ENCODE measurements at regions of chr2 and their contacts with region 1.

Region 1: GRCh38 chr2:61538200-61538919 is at the start of gene XPO1:
- DNase-seq: peak; percentile 96
- ATAC-seq: peak; percentile 77
- H3K4me3 Mint-ChIP-seq: peak within 1 kb of the TSS; percentile 90
- H3K27ac Mint-ChIP-seq: peak within 1 kb of the TSS; percentile 100
- H3K4me1 Mint-ChIP-seq: peaks cover 39% of the 10 kb centered on the region
- H3K27me3 Mint-ChIP-seq: no peaks in the 10 kb centered on the region
- CTCF ChIP-seq: no peak
- total RNA-seq, gene XPO1: 183 and 217 TPM in 2 replicates

Region 2: DNA sequence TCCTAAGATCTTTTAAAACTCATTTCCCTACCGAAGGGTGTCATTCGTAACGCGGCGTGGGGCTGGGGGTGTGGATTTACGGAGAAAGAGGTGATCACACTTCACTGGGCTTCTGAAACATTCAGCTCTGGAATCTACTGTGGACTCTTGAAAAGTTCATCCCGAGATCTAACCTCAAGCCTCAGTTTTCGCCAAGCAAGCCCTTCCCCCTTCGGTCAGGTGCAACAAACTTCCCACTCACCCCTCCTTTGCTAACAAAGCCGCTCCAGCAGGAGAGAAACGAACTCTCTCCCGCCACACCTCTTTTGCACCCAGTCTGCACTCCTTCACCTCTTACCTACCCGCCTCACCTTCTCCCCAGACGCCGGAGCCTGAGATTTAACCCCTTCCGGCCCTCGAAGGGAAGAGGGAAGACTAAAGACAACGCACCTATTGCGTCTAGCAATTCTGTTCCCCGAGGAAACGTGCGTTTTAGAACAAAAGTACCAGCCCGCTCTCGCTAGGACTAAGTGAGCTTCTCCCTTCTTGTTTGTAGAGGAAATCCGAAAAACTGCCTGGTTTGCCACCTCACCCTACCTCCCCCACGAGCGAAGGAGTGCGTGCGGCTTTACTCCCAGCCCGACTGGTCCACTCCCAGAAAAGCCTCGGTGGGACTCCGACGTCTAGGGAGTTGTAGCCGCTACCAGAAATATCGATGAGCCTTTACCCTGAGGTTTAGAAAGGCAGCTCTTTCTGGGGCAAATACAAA is 521.4 kb before region 1 on chr2:
- CTCF ChIA-PET with region 1: no interaction called
- POLR2A ChIA-PET with region 1: interaction called, 5 read pairs
- intact Hi-C with region 1: loop called (anchors 1 kb)
- DNase-seq: peak; percentile 62
- ATAC-seq: peak; percentile 70
- H3K4me3 Mint-ChIP-seq: peak overlapping the region; percentile 99
- H3K27ac Mint-ChIP-seq: peak overlapping the region; percentile 98
- H3K4me1 Mint-ChIP-seq: peaks cover 33% of the 10 kb centered on the region
- H3K27me3 Mint-ChIP-seq: no peaks in the 10 kb centered on the region
- CTCF ChIP-seq: no peak

Region 3: GRCh38 chr2:61426267-61426897 is 112.0 kb before region 1 on chr2:
- CTCF ChIA-PET with region 1: interaction called, 5 read pairs
- POLR2A ChIA-PET with region 1: interaction called, 21 read pairs
- intact Hi-C with region 1: loop called (anchors 2 kb)
- DNase-seq: peak; percentile 62
- ATAC-seq: peak; percentile 89
- H3K4me3 Mint-ChIP-seq: peak overlapping the region; percentile 19
- H3K27ac Mint-ChIP-seq: peak overlapping the region; percentile 92
- H3K4me1 Mint-ChIP-seq: peaks cover 69% of the 10 kb centered on the region
- H3K27me3 Mint-ChIP-seq: no peaks in the 10 kb centered on the region
- CTCF ChIP-seq: no peak

Region 4: DNA sequence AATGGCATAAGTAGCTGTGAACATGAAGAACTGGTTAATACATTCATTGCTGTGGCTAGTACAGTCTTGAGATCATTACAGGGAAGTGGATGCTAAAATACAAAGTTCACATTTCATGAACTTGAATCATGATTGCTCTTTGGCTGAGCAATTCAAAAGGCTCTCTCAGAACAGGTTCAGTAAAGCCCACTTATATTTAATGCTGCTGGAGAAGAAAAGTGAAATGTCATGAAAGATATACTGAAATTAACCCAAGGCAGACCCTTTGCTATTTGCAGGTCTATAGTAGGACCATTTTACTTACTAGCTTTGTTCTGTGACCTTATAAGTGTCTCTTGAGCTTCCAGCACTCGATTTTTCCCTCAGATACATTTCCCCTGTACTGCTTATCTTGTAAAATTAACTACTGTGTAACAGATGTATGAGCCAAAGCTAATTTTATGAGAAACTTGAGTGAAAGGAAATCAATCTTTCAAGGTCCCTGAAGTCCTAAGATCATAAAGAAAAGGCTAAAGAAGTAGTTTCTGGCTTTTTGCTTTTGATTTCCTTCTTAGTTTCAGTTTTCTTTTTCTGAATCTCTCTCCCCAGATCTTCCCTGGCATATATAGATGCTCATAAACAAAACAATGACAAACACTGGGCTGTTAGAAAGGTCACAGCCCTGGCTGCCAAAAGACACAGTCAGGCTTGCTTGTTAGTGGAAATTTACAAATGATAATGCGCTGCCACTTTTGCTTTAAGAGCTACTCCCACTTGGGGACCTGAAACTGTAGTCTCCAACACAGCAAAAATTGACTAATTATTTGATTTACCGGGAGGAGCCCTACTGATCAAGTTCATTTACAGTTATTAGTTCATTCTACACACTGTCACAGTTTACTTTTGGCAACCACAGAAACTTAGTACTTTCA is 132.5 kb after region 1 on chr2:
- CTCF ChIA-PET with region 1: no interaction called
- POLR2A ChIA-PET with region 1: interaction called, 10 read pairs
- intact Hi-C with region 1: no loop called
- DNase-seq: no peak
- ATAC-seq: no peak
- H3K4me3 Mint-ChIP-seq: peak overlapping the region; percentile 70
- H3K27ac Mint-ChIP-seq: peak overlapping the region; percentile 79
- H3K4me1 Mint-ChIP-seq: peaks cover 17% of the 10 kb centered on the region
- H3K27me3 Mint-ChIP-seq: no peaks in the 10 kb centered on the region
- CTCF ChIP-seq: no peak

Region 5: DNA sequence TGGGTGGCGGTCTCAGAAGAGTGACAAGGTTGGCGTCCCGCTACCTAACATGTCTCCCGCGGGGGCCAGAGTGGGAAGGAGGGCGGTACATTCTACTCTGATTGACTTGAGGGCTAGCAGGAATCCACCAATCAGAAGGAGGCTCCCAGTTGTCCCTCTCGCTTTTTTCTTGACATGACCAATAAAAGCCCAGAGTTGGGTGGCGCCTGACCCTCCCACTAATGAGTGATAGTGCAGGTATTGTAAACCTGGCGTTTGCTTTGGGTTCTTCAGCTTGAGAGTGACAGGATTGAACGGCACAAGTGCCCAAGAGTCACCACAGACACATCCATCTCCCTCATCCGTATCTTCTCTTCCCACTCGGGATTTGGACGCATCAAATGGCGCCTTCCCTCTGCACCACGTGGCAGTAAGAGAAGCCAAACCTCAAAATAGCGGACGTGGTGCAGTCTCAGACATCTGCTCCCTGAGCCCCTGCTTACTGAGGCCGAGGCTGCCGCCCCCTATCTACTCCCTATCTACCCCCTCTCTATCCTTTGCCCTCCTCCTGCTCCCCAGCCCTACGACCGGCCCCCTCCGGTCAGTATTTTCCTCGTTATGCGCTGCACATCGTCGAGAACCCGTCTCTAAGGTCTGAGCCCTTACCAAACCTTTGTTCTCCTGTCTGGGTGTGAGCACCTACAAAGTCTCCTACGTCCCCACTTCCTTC is 316.3 kb after region 1 on chr2:
- CTCF ChIA-PET with region 1: no interaction called
- POLR2A ChIA-PET with region 1: interaction called, 16 read pairs
- intact Hi-C with region 1: loop called (anchors 1 kb)
- DNase-seq: peak; percentile 69
- ATAC-seq: peak; percentile 86
- H3K4me3 Mint-ChIP-seq: peak overlapping the region; percentile 94
- H3K27ac Mint-ChIP-seq: peak overlapping the region; percentile 95
- H3K4me1 Mint-ChIP-seq: peaks cover 19% of the 10 kb centered on the region
- H3K27me3 Mint-ChIP-seq: no peaks in the 10 kb centered on the region
- CTCF ChIP-seq: no peak

Region 6: GRCh38 chr2:62705007-62705829 is 1166.9 kb after region 1 on chr2 and contains the start of gene EHBP1:
- CTCF ChIA-PET with region 1: no interaction called
- POLR2A ChIA-PET with region 1: interaction called, 4 read pairs
- intact Hi-C with region 1: loop called (anchors 1 kb)
- DNase-seq: peak; percentile 98
- ATAC-seq: peak; percentile 93
- H3K4me3 Mint-ChIP-seq: peak within 1 kb of the TSS; percentile 95
- H3K27ac Mint-ChIP-seq: peak within 1 kb of the TSS; percentile 78
- H3K4me1 Mint-ChIP-seq: peaks cover 34% of the 10 kb centered on the region
- H3K27me3 Mint-ChIP-seq: no peaks in the 10 kb centered on the region
- CTCF ChIP-seq: no peak
- total RNA-seq, gene EHBP1: 24.0 and 25.0 TPM in 2 replicates

Measured in activated B cell treated with CpG ODN at 0.5 μM for 24 hours (primary cell).